ENCODE measurements at regions of chr9 and their contacts with region 1.

Region 1: GRCh38 chr9:1939926-1940368 is 75.2 kb upstream of the SMARCA2 start:
- DNase-seq: no peak

Region 2: DNA sequence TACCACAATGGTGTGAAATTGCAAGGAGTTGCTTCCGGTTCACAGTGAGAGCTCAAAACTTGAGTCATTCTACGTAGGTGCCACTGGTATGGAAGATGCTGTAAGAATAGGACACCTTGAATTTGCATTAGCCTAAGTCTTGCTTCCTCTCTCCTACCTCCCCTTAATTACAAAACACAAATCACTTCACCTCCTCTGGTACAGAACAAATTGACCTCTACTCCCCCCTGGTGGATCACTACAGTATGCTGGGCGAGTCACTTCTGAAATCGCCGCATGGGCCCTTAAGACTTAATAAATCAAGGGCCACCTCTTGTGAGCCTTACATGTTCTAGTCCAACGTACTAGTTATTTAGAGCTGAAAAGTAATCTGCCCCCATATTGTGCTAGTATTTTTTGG is 70.1 kb before region 1 on chr9:
- intact Hi-C with region 1: no loop called
- DNase-seq: no peak

Region 3: GRCh38 chr9:2066312-2067273 is 126.6 kb after region 1 on chr9:
- intact Hi-C with region 1: loop called (anchors 10 kb)
- DNase-seq: no peak